ENCODE measurements at regions of chr1 and their contacts with region 1.

Region 1: DNA sequence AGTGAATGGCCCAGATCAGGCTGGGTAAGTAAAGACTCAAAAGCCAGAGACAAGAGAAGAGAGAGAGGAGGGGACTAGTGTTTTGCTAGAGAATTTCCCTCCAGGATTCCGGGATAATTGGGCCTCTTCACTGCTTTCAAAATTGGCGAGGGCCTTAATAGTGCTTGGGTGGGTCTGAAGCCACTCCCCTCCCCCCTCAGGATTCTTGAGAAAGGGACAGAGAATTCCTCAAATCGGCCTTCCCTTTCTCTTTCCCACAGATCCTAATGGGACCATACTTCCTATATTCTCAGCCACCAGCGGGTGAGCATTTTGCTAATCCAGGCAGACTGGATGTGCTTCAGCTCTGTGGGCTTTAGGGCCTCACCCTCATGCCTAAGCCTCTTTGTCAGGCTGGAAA is 11.9 kb downstream of the SFN start:
- DNase-seq: no peak
- ATAC-seq: no peak
- H3K4me3 ChIP-seq: no peak overlapping the region
- H3K27ac ChIP-seq: no peak overlapping the region
- H3K4me1 ChIP-seq: no peaks in the 10 kb centered on the region
- H3K27me3 ChIP-seq: no peaks in the 10 kb centered on the region

Region 2: GRCh38 chr1:26035959-26036755 is 838.7 kb before region 1 on chr1:
- intact Hi-C with region 1: no loop called
- DNase-seq: peak; percentile 85 to 95
- ATAC-seq: peak; percentile 97
- H3K4me3 ChIP-seq: peak overlapping the region; percentile 38 to 71
- H3K27ac ChIP-seq: no peak overlapping the region
- H3K4me1 ChIP-seq: no peaks in the 10 kb centered on the region
- H3K27me3 ChIP-seq: no peaks in the 10 kb centered on the region

Region 3: GRCh38 chr1:26811057-26811456 is 63.8 kb before region 1 on chr1:
- intact Hi-C with region 1: loop called (anchors 5 to 10 kb)
- DNase-seq: no peak
- ATAC-seq: no peak
- H3K4me3 ChIP-seq: no peak overlapping the region
- H3K27ac ChIP-seq: no peak overlapping the region
- H3K4me1 ChIP-seq: no peaks in the 10 kb centered on the region
- H3K27me3 ChIP-seq: no peaks in the 10 kb centered on the region

Region 4: DNA sequence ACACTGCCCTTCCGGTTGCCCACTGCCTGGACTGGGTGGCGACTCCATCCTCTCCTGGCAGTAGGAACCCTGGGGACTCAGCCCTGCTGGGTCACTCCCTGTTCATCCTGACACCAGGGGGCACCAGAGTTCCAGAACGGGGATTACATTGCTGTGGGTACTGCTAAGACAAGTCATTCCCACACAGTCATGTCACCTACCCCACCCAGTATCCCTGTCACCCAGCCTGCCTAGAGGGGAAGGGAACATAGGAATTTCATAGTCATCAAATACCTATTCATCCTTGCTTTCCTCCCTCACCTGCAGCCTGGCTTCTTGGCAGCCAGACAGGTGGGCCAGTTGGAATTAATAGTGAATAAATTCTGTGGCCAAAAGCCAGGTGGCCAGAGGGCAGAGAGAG is 21.7 kb before region 1 on chr1:
- intact Hi-C with region 1: loop called (anchors 1 kb)
- DNase-seq: peak; percentile 93 to 96
- ATAC-seq: peak; percentile 81
- H3K4me3 ChIP-seq: no peak overlapping the region
- H3K27ac ChIP-seq: no peak overlapping the region
- H3K4me1 ChIP-seq: no peaks in the 10 kb centered on the region
- H3K27me3 ChIP-seq: no peaks in the 10 kb centered on the region